PC-3 (cell line): ENCODE measurements at regions of chr15 and their contacts with region 1.

Region 1: DNA sequence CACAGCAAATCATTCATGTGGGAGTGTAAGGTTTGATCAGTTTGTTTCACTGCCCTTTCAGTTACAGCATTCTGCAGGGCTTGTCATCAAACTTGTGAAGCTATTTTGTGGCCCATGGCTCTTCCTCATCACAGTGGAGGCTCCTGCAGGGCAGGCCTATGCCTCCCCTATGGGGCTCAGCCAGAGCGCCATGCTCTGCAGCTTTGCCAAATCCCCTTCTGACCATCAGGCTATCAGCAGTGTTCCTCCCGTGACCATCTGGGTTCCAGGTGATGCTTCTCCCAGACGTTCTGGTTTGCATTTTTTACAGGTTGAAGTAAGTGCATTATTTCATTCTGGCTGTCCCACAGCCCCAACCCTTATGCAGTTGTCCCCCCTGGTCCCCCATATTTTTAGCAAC is 28.1 kb upstream of the REC114 start:
- DNase-seq: no peak
- ATAC-seq: no peak
- H3K4me3 ChIP-seq: no peak overlapping the region
- H3K27ac ChIP-seq: no peak overlapping the region
- H3K4me1 ChIP-seq: no peaks in the 10 kb centered on the region
- H3K27me3 ChIP-seq: peaks cover 5% of the 10 kb centered on the region; the same call in 1 of the 2 replicates
- CTCF ChIP-seq: no peak

Region 2: GRCh38 chr15:73426323-73426994 is 11.6 kb after region 1 on chr15:
- CTCF ChIA-PET with region 1: no interaction called
- POLR2A ChIA-PET with region 1: interaction called, 13 read pairs
- intact Hi-C with region 1: no loop called
- DNase-seq: no peak
- ATAC-seq: no peak
- H3K4me3 ChIP-seq: no peak overlapping the region
- H3K27ac ChIP-seq: no peak overlapping the region
- H3K4me1 ChIP-seq: no peaks in the 10 kb centered on the region
- H3K27me3 ChIP-seq: peaks cover 43% of the 10 kb centered on the region
- CTCF ChIP-seq: no peak